Activated CD8-positive, alpha-beta T cell treated with anti-CD3 and anti-CD28 coated beads, Interleukin-2, amount 10 ng/mL, durations not matched to agents 7 days and 5 days (primary cell): ENCODE measurements at regions of chr1 and their contacts with region 1.

Region 1: DNA sequence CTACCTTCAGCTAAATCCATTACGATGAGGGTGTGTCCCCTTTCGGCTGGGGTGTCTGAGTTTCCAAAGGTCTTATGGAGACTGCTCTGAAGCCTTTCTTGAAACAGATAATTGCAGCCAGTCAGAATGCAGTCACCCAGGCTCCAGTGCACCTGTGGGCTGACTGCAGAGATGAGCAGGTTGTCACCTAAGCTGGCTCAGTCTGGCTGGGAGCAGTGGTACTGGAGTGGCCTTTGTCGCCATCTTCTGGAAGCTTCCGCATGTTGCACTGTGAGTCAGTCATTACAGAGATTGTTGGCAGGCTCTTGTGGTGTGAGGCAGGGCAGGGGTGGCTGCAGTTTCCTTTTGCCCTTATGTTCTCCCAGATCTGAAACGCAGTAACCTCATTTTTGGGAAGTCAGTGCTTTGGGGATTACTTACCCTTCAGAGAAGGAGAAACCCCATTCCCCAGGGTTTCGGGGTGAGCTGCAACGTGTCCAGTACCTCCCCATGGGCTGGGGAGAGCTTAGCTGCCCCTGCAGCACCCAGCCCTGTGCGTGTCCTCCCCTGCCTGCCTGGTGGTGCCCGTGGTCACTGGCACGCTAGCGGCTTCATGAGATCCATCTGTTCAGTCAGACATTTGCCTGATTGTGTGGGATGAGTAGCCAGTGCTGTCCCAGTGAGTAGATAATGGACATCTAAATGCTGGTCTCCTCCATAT is 48.0 kb downstream of the SMYD2 start:
- DNase-seq: peak; percentile 86
- ATAC-seq: peak; percentile 94
- H3K4me3 Mint-ChIP-seq: no peak overlapping the region
- H3K27ac Mint-ChIP-seq: no peak overlapping the region
- H3K4me1 Mint-ChIP-seq: peaks cover 12% of the 10 kb centered on the region
- H3K27me3 Mint-ChIP-seq: no peaks in the 10 kb centered on the region

Region 2: DNA sequence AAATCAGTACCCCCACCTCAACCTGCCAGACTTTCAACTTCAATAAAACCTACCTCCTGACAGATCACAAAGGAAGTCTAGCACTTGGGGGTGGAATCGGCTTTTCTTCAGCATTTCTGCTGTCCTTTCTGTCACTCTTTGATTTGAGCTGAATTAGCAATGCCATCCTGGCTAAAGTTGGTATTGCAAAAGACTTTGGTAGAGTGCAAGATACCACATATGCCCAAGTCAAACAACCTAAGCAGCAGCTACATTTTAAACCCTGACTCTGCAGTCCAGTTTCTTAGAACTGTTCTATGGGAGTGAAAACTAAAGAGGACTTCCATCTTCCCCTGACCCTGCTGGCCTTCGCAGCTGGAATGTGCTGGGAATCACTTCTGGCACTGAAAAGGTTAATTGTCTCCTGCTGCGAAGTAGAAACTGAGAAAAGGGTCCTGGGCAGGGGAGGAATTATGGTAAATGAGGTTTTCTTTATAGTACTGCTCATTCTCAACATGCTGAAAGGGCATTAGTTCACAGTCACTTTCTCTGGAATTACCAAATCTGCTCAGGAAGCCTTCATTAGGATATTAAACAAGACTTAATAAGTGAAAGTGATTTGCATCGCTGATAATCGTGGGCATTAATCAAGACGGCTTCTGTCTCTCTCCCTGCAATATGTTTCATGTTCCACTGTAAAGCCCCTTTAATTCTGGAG is 174.2 kb before region 1 on chr1:
- CTCF ChIA-PET with region 1: no interaction called
- POLR2A ChIA-PET with region 1: no interaction called
- DNase-seq: no peak
- ATAC-seq: no peak
- H3K4me3 Mint-ChIP-seq: no peak overlapping the region
- H3K27ac Mint-ChIP-seq: no peak overlapping the region
- H3K4me1 Mint-ChIP-seq: no peaks in the 10 kb centered on the region
- H3K27me3 Mint-ChIP-seq: peaks cover 16% of the 10 kb centered on the region

Region 3: GRCh38 chr1:214213136-214213535 is 115.8 kb before region 1 on chr1:
- CTCF ChIA-PET with region 1: interaction called, 194 read pairs
- POLR2A ChIA-PET with region 1: no interaction called
- DNase-seq: no peak
- ATAC-seq: no peak
- H3K4me3 Mint-ChIP-seq: no peak overlapping the region
- H3K27ac Mint-ChIP-seq: no peak overlapping the region
- H3K4me1 Mint-ChIP-seq: no peaks in the 10 kb centered on the region
- H3K27me3 Mint-ChIP-seq: peaks cover 25% of the 10 kb centered on the region

Region 4: DNA sequence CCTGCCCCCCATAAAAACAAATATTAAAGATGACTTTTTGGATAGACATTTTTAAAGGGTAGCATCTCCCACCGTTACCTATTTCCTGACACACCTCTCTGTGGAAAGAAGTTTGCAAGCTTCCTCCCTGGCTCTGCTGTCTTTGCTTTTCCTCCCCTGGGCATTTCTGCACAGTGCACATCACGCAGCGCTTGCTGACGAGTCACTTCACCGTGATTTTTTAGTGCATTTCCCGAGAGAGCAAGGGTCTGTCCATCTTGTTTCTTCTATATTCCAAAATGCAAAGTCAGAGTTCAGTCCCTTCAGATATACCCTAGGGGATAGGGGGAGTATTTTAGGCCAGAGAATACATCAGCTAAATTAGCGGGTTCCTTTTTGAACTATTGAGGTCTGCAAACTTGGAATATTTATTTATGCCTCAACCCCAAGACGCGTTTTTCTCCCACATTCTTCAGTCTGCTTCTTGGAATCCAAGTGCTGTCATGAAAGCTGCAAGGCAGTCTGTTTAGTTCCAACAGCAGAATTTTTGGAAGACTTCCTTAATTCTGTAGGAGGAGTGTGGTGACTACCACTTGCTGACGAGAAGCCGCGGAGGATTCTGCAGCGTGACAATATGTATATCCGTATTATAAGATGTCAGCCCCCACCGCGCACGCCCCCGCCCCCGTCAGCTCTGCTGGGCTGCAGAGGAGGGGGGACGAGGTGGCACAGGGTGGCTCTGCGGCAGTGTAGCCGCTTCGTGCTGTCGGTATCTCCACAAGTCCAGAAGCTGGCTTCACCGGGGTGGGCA is 25.6 kb before region 1 on chr1:
- CTCF ChIA-PET with region 1: interaction called, 13 read pairs
- POLR2A ChIA-PET with region 1: no interaction called
- DNase-seq: no peak
- ATAC-seq: no peak
- H3K4me3 Mint-ChIP-seq: no peak overlapping the region
- H3K27ac Mint-ChIP-seq: no peak overlapping the region
- H3K4me1 Mint-ChIP-seq: peaks cover 9% of the 10 kb centered on the region
- H3K27me3 Mint-ChIP-seq: no peaks in the 10 kb centered on the region

Region 5: DNA sequence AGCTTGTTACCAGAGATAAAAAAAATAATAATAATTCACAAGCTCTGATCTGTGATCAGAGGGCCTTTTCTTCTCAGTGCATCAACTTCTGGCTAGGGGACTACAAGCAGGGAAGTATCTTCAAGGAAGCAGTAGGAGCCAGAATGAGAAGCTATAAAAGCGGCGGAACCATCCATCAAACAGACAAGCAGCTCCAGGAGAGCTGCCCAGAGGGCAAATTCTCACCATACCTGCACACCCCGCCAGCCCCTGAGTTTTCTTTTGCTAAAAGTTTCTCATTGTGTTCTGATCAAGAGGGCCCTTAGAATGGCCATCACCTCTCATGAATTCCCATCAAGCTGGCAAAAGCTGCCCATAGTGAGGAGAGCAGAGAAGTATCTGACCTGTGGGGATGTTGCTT is 51.5 kb after region 1 on chr1:
- CTCF ChIA-PET with region 1: interaction called, 13 read pairs
- POLR2A ChIA-PET with region 1: no interaction called
- DNase-seq: no peak
- ATAC-seq: no peak
- H3K4me3 Mint-ChIP-seq: no peak overlapping the region
- H3K27ac Mint-ChIP-seq: no peak overlapping the region
- H3K4me1 Mint-ChIP-seq: no peaks in the 10 kb centered on the region
- H3K27me3 Mint-ChIP-seq: peaks cover 4% of the 10 kb centered on the region

Region 6: DNA sequence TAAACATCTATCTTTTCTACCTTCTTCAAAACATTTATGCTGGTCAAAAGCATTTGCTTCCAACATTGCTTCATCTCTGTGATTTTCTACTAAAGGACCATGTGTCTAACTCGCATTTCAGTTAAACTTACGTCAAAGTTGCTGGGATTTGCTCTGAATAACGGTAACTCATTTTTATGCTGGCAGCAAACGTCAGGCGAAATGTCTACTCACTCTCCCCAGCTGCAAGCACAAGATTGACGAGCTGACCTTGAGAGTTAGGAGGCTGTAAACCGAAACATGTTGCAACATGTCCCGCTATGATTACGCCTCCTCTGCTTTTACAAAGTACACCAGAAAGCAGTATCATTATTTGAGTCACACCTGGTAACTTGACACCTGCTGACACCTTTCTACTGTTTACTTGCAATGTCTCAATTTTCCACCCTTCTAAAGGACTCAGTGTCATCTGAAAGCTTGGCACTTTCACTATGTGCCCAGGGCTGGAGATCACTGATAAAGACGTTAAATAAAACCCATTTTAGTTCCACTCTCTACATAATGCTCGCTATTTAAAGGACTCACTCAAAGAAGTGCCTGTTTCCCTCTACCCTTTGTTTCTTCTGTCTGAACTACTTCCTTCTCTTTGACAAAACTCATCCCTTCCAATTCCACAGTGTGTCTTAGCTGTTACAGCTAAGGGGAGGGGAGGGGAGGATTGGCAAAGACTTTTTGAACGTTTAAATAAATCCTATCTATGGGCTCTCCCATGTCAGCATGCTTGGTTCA is 110.6 kb after region 1 on chr1:
- CTCF ChIA-PET with region 1: interaction called, 14 read pairs
- POLR2A ChIA-PET with region 1: no interaction called
- DNase-seq: peak; percentile 47
- ATAC-seq: peak; percentile 68
- H3K4me3 Mint-ChIP-seq: peak overlapping the region; percentile 59
- H3K27ac Mint-ChIP-seq: peak overlapping the region; percentile 79
- H3K4me1 Mint-ChIP-seq: peaks cover 47% of the 10 kb centered on the region
- H3K27me3 Mint-ChIP-seq: peaks cover 9% of the 10 kb centered on the region

Region 7: GRCh38 chr1:214590696-214591095 is 261.8 kb after region 1 on chr1:
- CTCF ChIA-PET with region 1: interaction called, 235 read pairs
- POLR2A ChIA-PET with region 1: no interaction called
- DNase-seq: no peak
- ATAC-seq: no peak
- H3K4me3 Mint-ChIP-seq: no peak overlapping the region
- H3K27ac Mint-ChIP-seq: no peak overlapping the region
- H3K4me1 Mint-ChIP-seq: no peaks in the 10 kb centered on the region
- H3K27me3 Mint-ChIP-seq: peaks cover 9% of the 10 kb centered on the region